ENCODE measurements at regions of chr5 and their contacts with region 1.

Region 1: DNA sequence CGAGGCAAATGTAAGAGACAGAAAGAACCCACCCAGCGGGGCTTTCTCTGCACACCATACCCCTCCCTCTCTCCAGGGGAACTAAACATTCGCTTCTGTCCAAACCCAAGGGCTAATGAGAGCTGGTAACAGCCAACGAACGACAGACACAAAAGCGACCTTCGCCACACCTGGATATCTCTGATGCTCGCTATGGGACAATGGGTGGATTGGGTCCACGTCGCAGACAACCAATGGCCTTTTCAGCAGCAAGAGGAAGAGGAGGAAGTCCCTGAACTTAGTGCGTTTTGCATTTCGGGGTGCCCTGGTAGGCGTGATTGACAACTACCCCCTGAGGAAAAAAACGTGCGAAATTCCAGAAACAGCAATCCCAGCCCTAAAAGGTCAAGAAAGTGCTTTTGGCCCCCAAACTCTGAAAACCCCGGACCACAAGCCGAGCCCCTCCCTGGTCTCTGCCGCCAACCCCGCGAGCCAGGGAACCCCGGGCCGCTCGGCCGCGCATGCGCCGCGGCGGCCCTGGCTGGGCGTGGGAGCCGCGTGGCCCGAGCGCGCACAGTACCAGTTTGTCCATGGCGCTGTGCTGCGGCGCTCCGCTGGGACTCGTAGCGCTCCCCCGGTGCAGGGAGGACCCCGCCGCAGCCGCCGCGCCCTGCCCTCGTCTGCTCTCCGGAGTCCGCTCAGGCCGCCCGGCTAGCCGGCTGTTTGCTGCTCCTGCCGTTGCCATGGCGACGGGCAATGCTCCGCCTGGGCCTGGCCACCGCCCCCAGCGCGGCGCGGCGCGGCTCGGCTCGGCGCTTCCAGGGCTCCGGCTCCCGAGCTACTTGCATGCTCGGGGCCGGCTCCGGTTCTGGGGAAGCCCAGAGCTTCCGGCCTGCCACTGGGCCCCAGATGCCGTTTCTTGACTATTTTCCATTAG is 66.9 kb upstream of the DNAH5 start:
- DNase-seq: peak; percentile 90
- H3K4me3 ChIP-seq: peak overlapping the region; percentile 55 to 73 (median 62)
- H3K27ac ChIP-seq: peak overlapping the region; percentile 87
- H3K4me1 ChIP-seq: peaks cover 5% of the 10 kb centered on the region
- H3K27me3 ChIP-seq: no peaks in the 10 kb centered on the region
- CTCF ChIP-seq: peak in 1 of 2 donors; percentile 17

Region 2: GRCh38 chr5:14035859-14036440 is 24.6 kb after region 1 on chr5:
- CTCF ChIA-PET with region 1: no interaction called
- dilution Hi-C with region 1: no loop called
- in situ Hi-C with region 1: no loop called
- intact Hi-C with region 1: loop called (anchors 1 kb)
- DNase-seq: peak; percentile 99
- H3K4me3 ChIP-seq: peak overlapping the region in 2 of 3 experiments; percentile 7 to 22
- H3K27ac ChIP-seq: peak overlapping the region; percentile 93
- H3K4me1 ChIP-seq: peaks cover 62% of the 10 kb centered on the region
- H3K27me3 ChIP-seq: no peaks in the 10 kb centered on the region
- CTCF ChIP-seq: no peak

Region 3: GRCh38 chr5:14118527-14119320 is 107.4 kb after region 1 on chr5:
- CTCF ChIA-PET with region 1: no interaction called
- dilution Hi-C with region 1: loop called (anchors 5 kb)
- in situ Hi-C with region 1: no loop called
- intact Hi-C with region 1: no loop called
- DNase-seq: no peak
- H3K4me3 ChIP-seq: no peak overlapping the region
- H3K27ac ChIP-seq: no peak overlapping the region
- H3K4me1 ChIP-seq: peaks cover 8% of the 10 kb centered on the region
- H3K27me3 ChIP-seq: no peaks in the 10 kb centered on the region
- CTCF ChIP-seq: no peak

Region 4: DNA sequence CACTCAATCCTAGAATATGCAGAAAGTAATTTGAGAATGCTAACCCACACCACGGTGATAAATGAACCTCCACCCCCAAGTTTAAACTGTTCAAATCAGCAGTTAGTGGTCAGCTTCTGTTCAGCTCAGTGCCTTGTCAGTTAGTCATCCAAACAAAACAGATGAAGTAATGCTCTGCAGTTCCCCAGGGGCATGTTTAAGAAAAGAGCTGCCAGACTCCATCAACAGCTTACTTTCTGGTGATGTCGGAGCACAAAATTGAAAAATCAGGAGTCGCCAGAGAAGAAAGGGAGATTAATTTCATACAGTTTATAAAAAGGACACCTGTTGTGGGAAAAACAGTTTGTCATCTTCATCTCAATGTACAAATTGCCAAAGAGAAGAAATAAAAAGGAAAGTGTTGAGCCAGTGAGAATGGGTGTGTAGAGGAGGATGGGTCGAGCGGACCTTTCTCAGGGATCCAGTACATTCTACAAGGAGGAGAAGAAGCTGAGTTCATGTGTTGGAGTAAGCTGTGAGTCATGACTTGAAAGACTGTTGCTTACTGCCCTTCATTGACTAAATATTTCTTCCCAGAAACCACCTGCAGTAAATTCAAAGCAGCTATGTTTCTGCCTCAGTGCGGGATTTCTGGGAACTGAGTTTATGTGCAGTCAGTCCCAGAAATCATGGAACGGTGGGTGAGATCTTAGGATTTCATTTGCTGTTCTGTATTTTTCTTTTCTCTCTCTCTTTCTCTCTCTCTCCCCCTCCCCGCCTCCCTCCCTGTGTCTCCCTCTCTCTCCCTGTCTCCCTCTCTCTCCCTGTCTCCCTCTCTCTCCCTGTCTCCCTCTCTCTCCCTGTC is 145.5 kb after region 1 on chr5:
- CTCF ChIA-PET with region 1: no interaction called
- dilution Hi-C with region 1: no loop called
- in situ Hi-C with region 1: no loop called
- intact Hi-C with region 1: no loop called
- DNase-seq: peak; percentile 94
- H3K4me3 ChIP-seq: peak overlapping the region in 2 of 3 experiments; percentile 16 to 33
- H3K27ac ChIP-seq: peak overlapping the region; percentile 85
- H3K4me1 ChIP-seq: peaks cover 47% of the 10 kb centered on the region
- H3K27me3 ChIP-seq: no peaks in the 10 kb centered on the region
- CTCF ChIP-seq: no peak

Region 5: GRCh38 chr5:14286574-14287421 is 275.5 kb after region 1 on chr5:
- CTCF ChIA-PET with region 1: no interaction called
- dilution Hi-C with region 1: no loop called
- in situ Hi-C with region 1: loop called in 1 of 2 experiments (anchors 10 kb)
- intact Hi-C with region 1: no loop called
- DNase-seq: no peak
- H3K4me3 ChIP-seq: no peak overlapping the region
- H3K27ac ChIP-seq: no peak overlapping the region
- H3K4me1 ChIP-seq: no peaks in the 10 kb centered on the region
- H3K27me3 ChIP-seq: no peaks in the 10 kb centered on the region
- CTCF ChIP-seq: no peak

Region 6: GRCh38 chr5:14298126-14298847 is 286.9 kb after region 1 on chr5:
- CTCF ChIA-PET with region 1: no interaction called
- dilution Hi-C with region 1: no loop called
- in situ Hi-C with region 1: no loop called
- intact Hi-C with region 1: no loop called
- DNase-seq: peak; percentile 63
- H3K4me3 ChIP-seq: peak overlapping the region in 1 of 3 experiments; percentile 3
- H3K27ac ChIP-seq: peak overlapping the region; percentile 40
- H3K4me1 ChIP-seq: peaks cover 16% of the 10 kb centered on the region
- H3K27me3 ChIP-seq: no peaks in the 10 kb centered on the region
- CTCF ChIP-seq: no peak